ENCODE measurements at regions of chr11 and their contacts with region 1.

Region 1: GRCh38 chr11:59668950-59669610 is at the start of gene PATL1:
- DNase-seq: peak; percentile 98

Region 2: DNA sequence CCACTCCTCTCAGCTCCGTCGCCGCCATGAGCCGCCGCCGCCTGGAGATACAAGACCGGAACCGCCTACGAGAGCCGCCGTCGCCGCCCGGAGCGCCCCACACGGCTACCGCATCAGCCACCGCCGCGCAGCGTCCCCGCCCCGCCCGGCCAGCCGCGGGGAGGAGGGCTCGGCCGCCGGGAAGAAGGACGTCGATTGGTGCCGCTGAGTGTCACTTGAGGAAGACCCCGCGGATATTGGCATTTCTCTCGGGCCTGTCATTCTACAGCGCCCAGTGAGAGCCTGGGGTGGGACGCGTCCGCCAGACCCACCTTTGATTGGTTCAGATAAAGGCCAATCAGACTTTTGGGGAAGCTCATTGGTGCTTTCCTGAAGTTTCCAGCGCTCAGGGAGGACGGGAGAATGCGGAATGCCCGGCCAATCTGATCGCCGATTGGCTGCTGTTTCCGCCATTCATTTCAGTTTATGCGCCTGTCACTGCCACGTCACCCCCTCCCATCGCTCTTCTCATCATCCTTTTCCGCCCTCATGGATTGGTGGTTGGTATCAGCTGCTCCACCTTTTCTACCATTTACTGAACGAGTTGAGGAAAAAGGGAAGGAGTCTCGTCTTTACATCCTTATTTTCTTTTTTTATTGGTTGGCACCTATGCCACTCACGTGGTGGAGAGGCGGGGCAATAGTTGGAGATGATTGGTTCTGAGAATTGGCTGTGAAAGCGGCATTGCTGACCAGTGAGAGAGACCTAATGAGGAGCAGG is 53.3 kb before region 1 on chr11 and contains the start of gene OSBP:
- CTCF ChIA-PET with region 1: no interaction called
- POLR2A ChIA-PET with region 1: interaction called, 27 read pairs
- DNase-seq: peak; percentile 94

Measured in HEK293T (cell line).